Gastrocnemius medialis (tissue), 4 donors: ENCODE measurements at regions of chr1 and their contacts with region 1.

Region 1: DNA sequence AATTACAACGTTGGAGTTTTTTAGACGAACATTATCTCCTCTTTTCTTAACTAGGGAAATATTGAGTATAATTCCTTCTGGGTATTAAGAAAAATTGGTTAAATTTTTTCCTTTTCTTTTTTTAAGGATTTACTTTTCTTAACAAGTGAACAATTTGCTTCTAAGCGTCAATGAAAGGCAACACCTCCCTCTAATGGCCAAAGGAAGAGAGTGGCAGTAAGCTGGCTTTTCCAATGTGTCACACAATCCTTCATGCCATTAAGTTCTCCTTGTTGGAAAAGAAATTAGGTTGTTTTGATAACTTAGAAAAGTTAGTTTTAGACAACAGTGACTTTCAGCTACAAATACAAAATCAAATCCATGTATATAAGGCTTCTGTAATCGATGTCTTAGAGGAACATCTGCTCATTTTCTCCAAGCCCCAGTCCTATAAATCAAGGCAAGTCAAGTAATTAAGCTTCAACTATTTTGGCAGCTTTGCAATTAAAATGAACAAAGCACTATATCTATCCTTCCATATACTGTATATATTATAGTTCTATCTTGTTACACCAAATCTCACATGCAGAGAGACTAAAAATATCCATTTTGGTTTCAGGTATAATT is 62.8 kb downstream of the EDEM3 start:
- DNase-seq: no peak
- ATAC-seq: peak; percentile 59 to 73
- H3K4me3 ChIP-seq: no peak overlapping the region
- H3K27ac ChIP-seq: no peak overlapping the region
- H3K4me1 ChIP-seq: no peaks in the 10 kb centered on the region
- H3K27me3 ChIP-seq: no peaks in the 10 kb centered on the region
- CTCF ChIP-seq: peak; percentile 50 to 86 (median 76)
- POLR2A ChIP-seq: no peak

Region 2: DNA sequence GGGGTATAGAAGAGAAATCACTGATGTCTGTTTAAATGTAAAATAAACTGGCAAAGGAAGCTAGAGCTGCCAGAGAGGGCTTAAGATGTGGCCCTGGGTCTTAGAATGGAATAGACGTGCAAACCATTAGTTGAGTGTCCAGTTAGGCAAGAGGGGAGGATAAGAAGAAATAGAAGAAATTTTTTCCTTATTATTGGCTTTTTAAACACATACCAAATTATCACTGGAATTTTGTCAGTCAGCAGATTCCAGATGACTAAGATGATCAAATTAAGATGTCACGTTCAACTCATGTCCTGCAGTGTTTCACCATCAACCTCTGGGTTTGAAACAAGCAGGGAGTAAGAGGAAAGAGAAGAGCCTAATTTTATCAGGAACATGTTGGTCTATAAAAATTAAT is 376.6 kb before region 1 on chr1:
- in situ Hi-C with region 1: no loop called
- intact Hi-C with region 1: loop called (anchors 5 kb)
- DNase-seq: no peak
- ATAC-seq: peak in 1 of 2 donors; percentile 43
- H3K4me3 ChIP-seq: no peak overlapping the region
- H3K27ac ChIP-seq: no peak overlapping the region
- H3K4me1 ChIP-seq: no peaks in the 10 kb centered on the region
- H3K27me3 ChIP-seq: no peaks in the 10 kb centered on the region
- CTCF ChIP-seq: no peak
- POLR2A ChIP-seq: no peak

Region 3: DNA sequence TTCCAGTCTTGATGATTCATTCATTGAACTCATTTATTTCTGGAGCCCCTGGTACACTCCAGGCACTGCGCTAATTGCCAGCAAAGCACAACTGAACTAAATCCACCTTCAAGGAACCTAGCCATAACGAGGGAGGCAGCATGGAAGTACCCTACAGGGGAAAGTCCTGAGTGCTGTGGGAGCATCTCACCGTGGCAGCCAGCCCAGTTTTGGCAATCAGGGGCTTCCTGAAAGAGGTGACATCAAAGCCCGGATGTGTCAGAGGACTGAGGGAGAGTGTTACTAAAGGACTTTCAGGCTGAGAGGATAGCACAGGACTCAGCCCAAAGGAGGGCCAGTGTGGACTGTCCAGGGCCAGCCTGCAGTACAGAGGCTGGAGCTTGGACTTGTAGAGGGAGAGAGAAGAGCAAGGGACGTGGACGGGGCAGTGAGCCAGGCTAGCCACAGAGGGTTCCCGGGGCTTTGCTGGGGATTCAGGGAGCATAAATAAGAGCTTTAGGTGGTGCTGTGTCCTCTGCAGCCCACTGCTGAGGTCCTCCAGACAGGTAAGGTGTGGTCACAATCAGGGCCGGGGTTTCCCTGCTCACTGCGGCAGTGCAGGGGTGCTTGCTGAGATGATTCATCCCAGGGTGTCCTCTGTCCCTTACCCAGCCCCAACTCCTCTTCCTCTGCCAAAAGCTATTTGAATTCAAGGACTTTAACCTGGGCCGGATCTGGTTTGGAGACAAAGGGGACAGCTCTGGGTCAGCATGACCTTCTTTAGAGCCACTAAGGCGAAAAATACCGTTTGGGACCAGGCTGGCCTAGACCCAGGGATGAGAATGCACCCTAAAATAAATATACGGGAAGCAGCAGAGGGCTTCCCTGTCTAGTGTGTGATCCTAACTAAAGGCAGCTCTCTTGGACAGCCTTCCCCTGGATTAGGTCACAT is 65.5 kb before region 1 on chr1:
- in situ Hi-C with region 1: no loop called
- intact Hi-C with region 1: no loop called
- DNase-seq: peak; percentile 51 to 74
- ATAC-seq: peak; percentile 38 to 49
- H3K4me3 ChIP-seq: no peak overlapping the region
- H3K27ac ChIP-seq: peak overlapping the region; percentile 87 to 97 (median 88)
- H3K4me1 ChIP-seq: peaks cover 85 to 98% of the 10 kb centered on the region in 2 donors
- H3K27me3 ChIP-seq: no peaks in the 10 kb centered on the region
- CTCF ChIP-seq: no peak
- POLR2A ChIP-seq: no peak

Region 4: DNA sequence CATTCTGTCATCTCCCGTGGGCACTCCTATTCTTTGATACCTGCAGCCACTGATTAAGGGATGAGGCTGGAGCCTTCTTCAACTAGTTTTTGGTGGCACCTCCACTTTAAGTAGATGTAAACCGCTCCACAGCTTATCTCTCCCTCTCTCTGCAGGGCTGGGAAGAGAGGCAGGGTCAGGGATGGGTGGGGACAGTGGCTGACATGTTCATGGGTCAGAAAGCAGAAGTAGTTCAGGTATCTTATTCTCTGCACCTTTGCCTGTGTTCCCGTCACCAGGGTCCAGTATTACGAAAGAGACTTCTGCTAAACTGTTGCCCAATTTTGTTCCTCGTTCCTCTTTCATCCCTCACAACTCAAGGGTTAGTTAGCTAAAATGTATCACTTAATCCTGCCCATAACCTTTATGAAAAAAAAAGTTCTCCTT is 114.5 kb after region 1 on chr1:
- in situ Hi-C with region 1: no loop called
- intact Hi-C with region 1: no loop called
- DNase-seq: no peak
- ATAC-seq: peak in 1 of 2 donors; percentile 2
- H3K4me3 ChIP-seq: no peak overlapping the region
- H3K27ac ChIP-seq: peak overlapping the region; percentile 25 to 90 (median 61)
- H3K4me1 ChIP-seq: peaks cover 41 to 43% of the 10 kb centered on the region in 2 donors
- H3K27me3 ChIP-seq: no peaks in the 10 kb centered on the region
- CTCF ChIP-seq: no peak
- POLR2A ChIP-seq: no peak

Region 5: GRCh38 chr1:184827600-184828368 is 136.0 kb after region 1 on chr1:
- in situ Hi-C with region 1: no loop called
- intact Hi-C with region 1: no loop called
- DNase-seq: no peak
- ATAC-seq: peak; percentile 71 to 87
- H3K4me3 ChIP-seq: no peak overlapping the region
- H3K27ac ChIP-seq: peak overlapping the region; percentile 73 to 82 (median 81)
- H3K4me1 ChIP-seq: peaks cover 59 to 64% of the 10 kb centered on the region in 2 donors
- H3K27me3 ChIP-seq: no peaks in the 10 kb centered on the region
- CTCF ChIP-seq: no peak
- POLR2A ChIP-seq: no peak